ENCODE measurements at regions of chrX and their contacts with region 1.

Region 1: DNA sequence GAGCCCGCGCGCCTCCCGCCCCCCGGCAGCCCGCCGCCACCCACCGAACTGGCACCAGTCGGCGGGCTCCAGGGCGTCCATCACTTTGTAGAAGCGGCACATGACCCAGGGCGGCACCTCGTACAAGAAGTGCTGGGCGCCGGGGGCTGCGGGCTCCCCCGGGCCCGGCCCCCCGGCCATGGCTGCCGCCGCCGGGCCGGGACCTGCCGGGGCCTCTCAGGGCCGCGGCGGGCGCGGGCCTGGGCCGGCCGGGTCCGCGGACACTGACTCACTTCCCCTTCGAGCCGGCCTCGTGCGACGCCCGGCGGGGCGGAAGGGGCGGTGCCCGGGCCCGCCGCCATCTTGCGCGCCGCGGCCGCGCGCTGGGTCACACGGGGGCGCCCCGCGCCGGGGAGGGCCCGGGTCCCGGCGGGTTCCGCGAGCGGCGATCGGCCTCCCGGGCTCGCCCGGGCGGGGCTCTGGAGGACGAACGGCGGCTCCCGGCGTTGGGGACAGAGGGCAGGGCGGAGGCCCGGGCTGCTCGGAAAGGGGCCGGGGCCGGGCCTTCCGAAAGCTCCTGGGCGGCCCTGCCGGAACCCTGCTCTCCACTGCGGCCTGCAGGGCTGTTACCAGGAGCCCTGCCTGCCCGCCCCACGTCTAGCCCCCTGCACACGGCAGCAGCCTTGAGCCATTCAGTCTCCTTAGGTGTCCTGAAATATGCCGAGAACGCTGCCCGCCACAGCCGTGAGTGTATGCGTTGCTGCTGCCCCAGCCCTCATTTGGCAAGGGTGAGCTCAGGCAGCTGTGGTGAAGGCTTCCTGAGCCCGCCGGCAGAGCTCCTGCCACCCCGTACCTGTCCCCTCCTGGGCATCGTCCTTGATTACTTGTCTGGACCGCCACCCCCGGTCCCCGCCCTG is at the start of gene IRAK1:
- DNase-seq: peak; percentile 85
- CTCF ChIP-seq: no peak

Region 2: GRCh38 chrX:154534862-154535670 is 515.2 kb after region 1 on chrX:
- in situ Hi-C with region 1: loop called (anchors 25 kb)
- DNase-seq: peak; percentile 91
- CTCF ChIP-seq: peak; percentile 100

Measured in GM13976 (cell line).